ENCODE measurements at regions of chr18 and their contacts with region 1.

Region 1: DNA sequence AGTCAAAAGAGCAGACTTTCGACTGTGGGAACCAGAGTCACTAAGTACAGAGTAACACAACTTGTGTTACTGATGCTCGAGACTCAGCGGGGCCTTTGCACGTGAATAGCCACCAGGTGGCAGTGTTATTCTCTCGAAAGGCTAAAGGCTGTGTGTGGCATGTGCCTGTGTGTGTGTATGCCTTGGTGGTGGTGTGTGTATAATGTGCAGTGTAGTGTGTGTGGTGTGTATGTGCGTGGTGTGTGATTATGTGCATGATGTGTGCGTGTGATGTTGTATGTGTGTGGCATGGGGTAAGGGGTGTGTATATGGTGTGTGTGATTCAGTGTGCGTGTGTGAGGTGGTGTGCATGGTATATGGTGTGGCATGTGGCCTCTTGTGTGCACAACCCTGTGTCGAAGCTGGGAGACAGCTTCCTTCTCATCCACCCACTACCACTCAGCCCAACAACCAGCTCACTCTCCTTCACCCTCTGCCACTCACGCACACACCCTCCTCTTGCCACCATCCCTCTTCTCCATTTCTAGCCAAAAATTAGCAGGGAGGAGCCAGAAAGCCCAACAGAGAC is 83.0 kb upstream of the ZNF532 start:
- DNase-seq: peak; percentile 86

Region 2: GRCh38 chr18:58887613-58887963 is 105.9 kb after region 1 on chr18:
- in situ Hi-C with region 1: no loop called
- DNase-seq: peak; percentile 92

Region 3: GRCh38 chr18:59070181-59070912 is 288.6 kb after region 1 on chr18:
- in situ Hi-C with region 1: loop called (anchors 25 kb)
- DNase-seq: peak; percentile 87

Measured in SK-MEL-5 (cell line).